ENCODE measurements at regions of chr1 and their contacts with region 1.

Region 1: DNA sequence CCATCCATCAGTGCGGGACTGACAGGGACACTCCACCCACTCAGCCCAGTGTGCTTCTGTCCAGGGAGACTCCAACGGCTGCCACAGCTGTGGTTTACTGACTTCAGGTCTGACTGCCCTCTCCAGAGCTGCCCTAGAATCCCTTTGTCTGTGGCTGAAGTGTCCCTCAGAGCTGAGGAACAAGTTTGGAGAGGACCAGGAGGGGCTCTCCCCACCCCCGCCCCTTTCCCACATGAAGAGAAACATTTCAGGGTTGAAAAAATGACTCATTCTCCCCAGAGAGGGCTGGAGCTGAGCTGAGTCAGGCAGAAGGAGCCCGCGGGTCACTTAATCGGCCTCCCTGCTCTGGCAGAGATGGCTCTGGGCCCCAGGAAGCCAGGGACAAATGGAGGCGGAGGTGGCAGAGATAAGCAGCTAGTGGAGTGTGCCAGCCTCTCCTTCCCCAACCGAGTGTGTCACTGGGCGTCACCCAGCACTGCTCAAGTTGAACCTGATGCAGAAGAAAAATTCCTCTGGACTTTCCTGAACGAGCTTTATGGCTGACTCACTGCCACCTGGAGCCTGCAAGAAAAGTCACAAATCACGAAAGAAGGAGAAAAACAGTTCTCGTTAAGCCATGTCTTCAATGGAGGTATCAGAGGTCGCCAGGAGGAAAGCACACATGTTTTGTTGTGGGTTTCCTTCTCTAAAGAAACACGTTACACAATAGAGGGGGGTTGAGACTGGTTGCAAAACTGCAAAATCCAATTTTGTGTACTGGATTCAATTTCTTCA is 34.3 kb upstream of the ECE1 start:
- DNase-seq: peak in 8 of 9 donors; percentile 42 to 78 (median 56)
- ATAC-seq: peak; percentile 70
- H3K4me3 ChIP-seq: peak overlapping the region; percentile 25
- H3K4me3 Mint-ChIP-seq: peak overlapping the region; percentile 72 to 88 (median 84)
- H3K27ac ChIP-seq: peak overlapping the region; percentile 75
- H3K27ac Mint-ChIP-seq: peak overlapping the region; percentile 85 to 97 (median 95)
- H3K4me1 ChIP-seq: peaks cover 38 to 60% of the 10 kb centered on the region in 2 donors
- H3K4me1 Mint-ChIP-seq: peaks cover 43 to 99% (median 83%) of the 10 kb centered on the region in 7 donors
- H3K27me3 ChIP-seq: no peaks in the 10 kb centered on the region
- H3K27me3 Mint-ChIP-seq: no peaks in the 10 kb centered on the region

Region 2: GRCh38 chr1:21270086-21270689 is 54.4 kb before region 1 on chr1:
- CTCF ChIA-PET with region 1: interaction called, 31 read pairs
- POLR2A ChIA-PET with region 1: interaction called, 6 read pairs
- intact Hi-C with region 1: no loop called
- DNase-seq: peak; percentile 67 to 87 (median 80)
- ATAC-seq: peak; percentile 95
- H3K4me3 ChIP-seq: no peak overlapping the region
- H3K4me3 Mint-ChIP-seq: peak overlapping the region in 2 of 10 donors; percentile 6 to 48
- H3K27ac ChIP-seq: no peak overlapping the region
- H3K27ac Mint-ChIP-seq: peak overlapping the region; percentile 8 to 80 (median 48)
- H3K4me1 ChIP-seq: peaks cover 0 to 18% of the 10 kb centered on the region in 2 donors
- H3K4me1 Mint-ChIP-seq: peaks cover 13 to 34% (median 18%) of the 10 kb centered on the region in 7 donors
- H3K27me3 ChIP-seq: no peaks in the 10 kb centered on the region
- H3K27me3 Mint-ChIP-seq: no peaks in the 10 kb centered on the region

Region 3: DNA sequence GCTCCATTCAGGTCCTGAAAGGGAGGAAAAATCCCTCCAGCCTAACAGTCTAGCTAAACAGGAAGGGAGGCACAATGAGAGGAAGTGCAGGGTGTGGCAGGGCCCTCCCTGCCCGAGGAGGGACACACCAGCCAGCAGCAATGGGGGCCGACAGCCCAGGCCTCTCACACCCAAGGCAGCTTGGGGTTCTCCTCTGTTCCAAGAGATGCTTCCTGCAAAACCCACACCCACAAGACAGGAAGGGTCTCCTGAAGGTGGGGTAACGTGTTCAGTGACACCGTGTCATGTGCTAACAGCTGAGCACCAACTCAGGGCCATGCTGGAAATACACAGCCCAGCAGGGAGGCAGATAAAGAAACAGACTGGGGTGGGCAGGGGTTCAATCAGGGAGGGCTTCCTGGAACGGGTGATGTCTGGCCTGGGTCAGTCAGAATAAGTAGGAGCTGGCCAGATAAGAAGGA is 44.5 kb before region 1 on chr1:
- CTCF ChIA-PET with region 1: no interaction called
- POLR2A ChIA-PET with region 1: interaction called, 427 read pairs
- intact Hi-C with region 1: no loop called
- DNase-seq: peak in 4 of 9 donors; percentile 15 to 22 (median 18)
- ATAC-seq: peak; percentile 68
- H3K4me3 ChIP-seq: peak overlapping the region; percentile 21
- H3K4me3 Mint-ChIP-seq: peak overlapping the region; percentile 61 to 82 (median 75)
- H3K27ac ChIP-seq: peak overlapping the region; percentile 66
- H3K27ac Mint-ChIP-seq: peak overlapping the region; percentile 93 to 99 (median 95)
- H3K4me1 ChIP-seq: peaks cover 34 to 37% of the 10 kb centered on the region in 2 donors
- H3K4me1 Mint-ChIP-seq: peaks cover 29 to 61% (median 54%) of the 10 kb centered on the region in 7 donors
- H3K27me3 ChIP-seq: no peaks in the 10 kb centered on the region
- H3K27me3 Mint-ChIP-seq: no peaks in the 10 kb centered on the region

Region 4: GRCh38 chr1:21313203-21313885 is 11.2 kb before region 1 on chr1:
- CTCF ChIA-PET with region 1: interaction called, 8 read pairs
- POLR2A ChIA-PET with region 1: interaction called, 12 read pairs
- intact Hi-C with region 1: no loop called
- DNase-seq: no peak
- ATAC-seq: no peak
- H3K4me3 ChIP-seq: no peak overlapping the region
- H3K4me3 Mint-ChIP-seq: peak overlapping the region in 1 of 10 donors; percentile 32
- H3K27ac ChIP-seq: no peak overlapping the region
- H3K27ac Mint-ChIP-seq: peak overlapping the region in 3 of 9 donors; percentile 12 to 68 (median 20)
- H3K4me1 ChIP-seq: peaks cover 0 to 23% of the 10 kb centered on the region in 2 donors
- H3K4me1 Mint-ChIP-seq: peaks cover 34 to 68% (median 49%) of the 10 kb centered on the region in 7 donors
- H3K27me3 ChIP-seq: no peaks in the 10 kb centered on the region
- H3K27me3 Mint-ChIP-seq: no peaks in the 10 kb centered on the region

Region 5: DNA sequence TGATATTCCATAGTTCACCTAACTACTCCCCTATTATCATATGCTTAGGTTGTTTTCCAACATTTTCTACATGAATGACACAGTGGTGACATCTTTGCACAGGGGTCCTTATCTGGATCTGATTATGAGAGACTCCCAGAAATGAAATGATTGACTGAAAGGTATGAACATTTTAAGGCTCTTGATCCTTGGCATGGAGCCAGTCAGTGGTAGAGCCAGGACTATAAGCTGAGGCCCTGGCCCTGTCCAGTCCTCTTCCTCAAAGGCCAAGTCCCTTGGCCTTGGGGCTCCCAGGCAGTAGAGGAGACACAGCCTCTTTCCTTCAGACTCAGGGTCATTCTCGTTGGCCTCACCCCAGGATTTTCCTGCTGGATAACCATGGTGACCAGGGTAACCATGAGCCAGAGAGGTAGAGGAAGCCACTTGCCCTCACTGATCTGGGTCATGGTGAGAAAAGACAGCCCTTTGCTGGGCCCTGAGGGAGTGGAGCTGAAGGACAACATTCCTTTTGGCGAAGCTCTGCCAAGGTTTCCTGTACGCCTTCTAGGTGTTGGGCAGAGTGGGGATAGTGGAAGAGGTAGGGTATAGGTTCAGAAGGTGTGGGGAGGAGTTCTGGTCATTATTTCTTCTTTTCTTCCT is 871.4 kb after region 1 on chr1:
- CTCF ChIA-PET with region 1: no interaction called
- POLR2A ChIA-PET with region 1: no interaction called
- intact Hi-C with region 1: no loop called
- DNase-seq: no peak
- ATAC-seq: no peak
- H3K4me3 ChIP-seq: no peak overlapping the region
- H3K4me3 Mint-ChIP-seq: no peak overlapping the region
- H3K27ac ChIP-seq: no peak overlapping the region
- H3K27ac Mint-ChIP-seq: peak overlapping the region in 1 of 9 donors; percentile 68
- H3K4me1 ChIP-seq: no peaks in the 10 kb centered on the region
- H3K4me1 Mint-ChIP-seq: no peaks in the 10 kb centered on the region
- H3K27me3 ChIP-seq: no peaks in the 10 kb centered on the region
- H3K27me3 Mint-ChIP-seq: peaks cover 11 to 29% (median 21%) of the 10 kb centered on the region in 5 donors